CD4-positive, alpha-beta T cell (primary cell): ENCODE measurements at regions of chr6 and their contacts with region 1.

Region 1: DNA sequence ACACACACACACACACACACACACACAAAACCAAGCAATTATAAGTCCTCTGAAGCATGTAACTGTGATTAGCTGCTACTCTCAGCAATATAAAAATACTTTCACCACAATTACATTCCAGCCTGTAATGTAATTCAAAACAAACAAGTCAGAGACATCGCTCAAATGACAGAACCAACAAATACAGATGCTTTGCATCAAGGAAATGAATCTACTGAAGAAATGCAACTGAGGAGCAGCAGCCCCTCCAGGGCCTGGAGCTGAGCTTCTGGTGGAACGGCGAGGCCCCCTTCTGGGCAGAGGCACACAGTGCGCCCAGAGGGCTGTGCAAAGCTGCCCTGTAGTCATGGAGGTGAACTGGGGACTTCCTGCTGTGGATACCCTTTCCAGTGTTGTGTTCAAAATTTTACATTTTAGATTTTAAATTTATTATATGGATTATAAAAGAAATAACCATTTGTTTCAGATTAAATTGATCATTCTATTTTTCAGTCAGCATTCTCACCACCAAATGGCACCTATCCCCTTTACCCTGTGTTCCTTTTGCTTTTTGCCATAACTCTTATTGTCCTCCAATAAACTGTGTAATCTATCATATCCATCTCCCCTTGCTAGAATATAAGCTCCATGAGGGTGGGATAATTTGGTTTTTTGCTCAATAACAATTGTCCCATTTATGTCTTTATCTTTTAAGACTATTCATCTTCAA is 23.2 kb downstream of the ADAT2 start:
- DNase-seq: peak; percentile 59 to 84 (median 67)
- ATAC-seq: peak; percentile 100
- H3K4me3 ChIP-seq: no peak overlapping the region
- H3K4me3 Mint-ChIP-seq: no peak overlapping the region
- H3K27ac ChIP-seq: no peak overlapping the region
- H3K27ac Mint-ChIP-seq: peak overlapping the region; percentile 14
- H3K4me1 ChIP-seq: no peaks in the 10 kb centered on the region
- H3K4me1 Mint-ChIP-seq: no peaks in the 10 kb centered on the region
- H3K27me3 ChIP-seq: no peaks in the 10 kb centered on the region
- H3K27me3 Mint-ChIP-seq: no peaks in the 10 kb centered on the region
- CTCF ChIP-seq: peak; percentile 88

Region 2: DNA sequence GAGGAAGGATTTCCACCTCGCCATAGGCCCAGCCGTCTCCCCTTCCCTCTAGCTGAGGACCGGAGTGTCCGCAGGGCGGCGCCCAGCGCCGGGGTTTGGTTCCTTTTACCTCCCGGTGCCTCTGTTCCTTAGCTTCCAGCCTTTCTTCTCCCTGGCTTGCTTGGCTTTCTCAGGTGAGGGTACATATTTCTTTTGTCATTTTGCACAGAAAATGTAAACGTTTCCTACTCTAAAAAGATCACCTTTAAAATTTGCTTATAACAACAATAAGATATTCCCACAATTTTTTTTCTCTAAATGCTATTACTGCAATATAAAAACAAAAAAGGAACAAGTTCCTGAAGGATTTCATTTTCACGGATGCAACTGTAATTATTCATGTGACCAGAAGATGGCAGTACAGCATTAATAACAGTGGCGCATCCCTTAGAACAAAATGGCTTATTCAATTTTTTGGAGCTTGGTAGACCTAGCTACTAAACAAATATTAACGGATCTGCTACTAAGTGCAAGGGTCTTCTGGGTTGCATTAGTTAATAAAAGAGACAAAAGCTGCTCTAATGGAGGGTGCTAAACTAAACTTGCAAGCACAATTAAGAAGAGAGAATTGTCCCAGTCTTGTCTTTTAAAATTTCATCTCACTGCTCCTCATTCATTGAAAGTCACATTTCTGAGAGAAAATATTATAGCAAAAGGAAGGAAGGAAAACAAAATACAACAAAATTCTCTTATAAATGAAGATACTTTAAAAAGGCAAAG is 952.6 kb before region 1 on chr6:
- CTCF ChIA-PET with region 1: interaction called, 20 read pairs
- POLR2A ChIA-PET with region 1: no interaction called
- intact Hi-C with region 1: loop called (anchors 1 kb)
- DNase-seq: peak in 3 of 14 experiments; percentile 34 to 74 (median 64)
- ATAC-seq: peak; percentile 62
- H3K4me3 ChIP-seq: no peak overlapping the region
- H3K4me3 Mint-ChIP-seq: no peak overlapping the region
- H3K27ac ChIP-seq: no peak overlapping the region
- H3K27ac Mint-ChIP-seq: no peak overlapping the region
- H3K4me1 ChIP-seq: no peaks in the 10 kb centered on the region
- H3K4me1 Mint-ChIP-seq: peaks cover 6% of the 10 kb centered on the region
- H3K27me3 ChIP-seq: no peaks in the 10 kb centered on the region
- H3K27me3 Mint-ChIP-seq: no peaks in the 10 kb centered on the region
- CTCF ChIP-seq: peak; percentile 94

Region 3: DNA sequence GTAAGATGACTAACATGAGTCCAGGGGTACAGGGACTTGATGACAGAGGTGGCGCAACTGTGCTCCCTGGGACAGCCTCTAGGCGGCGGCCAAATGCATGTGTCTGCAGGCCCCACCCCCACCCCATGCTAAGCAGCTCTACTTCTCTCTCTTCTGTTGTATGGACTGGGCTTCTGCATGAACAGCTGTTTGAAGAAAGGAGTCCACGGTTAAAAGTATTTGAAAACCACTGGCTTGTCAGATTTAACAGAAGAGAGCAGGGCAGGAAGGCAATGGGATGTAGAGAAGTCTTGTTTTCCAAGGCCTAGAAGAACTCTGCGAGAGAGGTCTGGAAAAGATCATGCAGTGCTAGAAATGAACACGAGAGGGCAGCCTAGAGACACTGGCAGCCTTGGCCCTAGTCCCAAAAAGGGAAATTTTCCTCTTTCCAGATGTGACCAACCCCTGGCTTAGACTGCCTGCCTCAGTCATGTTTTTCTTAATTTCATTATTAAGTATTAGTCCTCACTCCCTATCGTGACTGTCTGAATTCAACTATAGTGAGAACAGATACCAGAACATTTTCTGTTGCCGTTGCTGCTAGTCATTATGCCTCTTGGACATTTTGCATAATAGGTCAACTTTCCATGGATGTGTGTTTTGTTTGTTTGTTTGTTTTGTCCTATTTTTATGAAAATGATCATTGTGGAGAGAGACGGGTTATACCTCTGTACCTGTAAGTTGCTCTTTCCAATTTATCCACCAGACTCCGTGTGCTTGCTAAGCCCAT is 860.5 kb before region 1 on chr6:
- CTCF ChIA-PET with region 1: interaction called, 7 read pairs
- POLR2A ChIA-PET with region 1: no interaction called
- intact Hi-C with region 1: loop called (anchors 1 to 5 kb)
- DNase-seq: peak; percentile 14 to 76 (median 47)
- ATAC-seq: peak; percentile 62
- H3K4me3 ChIP-seq: no peak overlapping the region
- H3K4me3 Mint-ChIP-seq: peak overlapping the region; percentile 57
- H3K27ac ChIP-seq: no peak overlapping the region
- H3K27ac Mint-ChIP-seq: peak overlapping the region; percentile 79
- H3K4me1 ChIP-seq: peaks cover 35% of the 10 kb centered on the region
- H3K4me1 Mint-ChIP-seq: peaks cover 77% of the 10 kb centered on the region
- H3K27me3 ChIP-seq: no peaks in the 10 kb centered on the region
- H3K27me3 Mint-ChIP-seq: no peaks in the 10 kb centered on the region
- CTCF ChIP-seq: peak; percentile 82

Region 4: GRCh38 chr6:142952614-142953013 is 474.6 kb before region 1 on chr6:
- CTCF ChIA-PET with region 1: no interaction called
- POLR2A ChIA-PET with region 1: no interaction called
- intact Hi-C with region 1: loop called in 1 of 2 experiments (anchors 5 kb)
- DNase-seq: peak in 1 of 14 experiments; percentile 46
- ATAC-seq: no peak
- H3K4me3 ChIP-seq: no peak overlapping the region
- H3K4me3 Mint-ChIP-seq: no peak overlapping the region
- H3K27ac ChIP-seq: no peak overlapping the region
- H3K27ac Mint-ChIP-seq: peak overlapping the region; percentile 98
- H3K4me1 ChIP-seq: no peaks in the 10 kb centered on the region
- H3K4me1 Mint-ChIP-seq: peaks cover 30% of the 10 kb centered on the region
- H3K27me3 ChIP-seq: no peaks in the 10 kb centered on the region
- H3K27me3 Mint-ChIP-seq: no peaks in the 10 kb centered on the region
- CTCF ChIP-seq: no peak

Region 5: DNA sequence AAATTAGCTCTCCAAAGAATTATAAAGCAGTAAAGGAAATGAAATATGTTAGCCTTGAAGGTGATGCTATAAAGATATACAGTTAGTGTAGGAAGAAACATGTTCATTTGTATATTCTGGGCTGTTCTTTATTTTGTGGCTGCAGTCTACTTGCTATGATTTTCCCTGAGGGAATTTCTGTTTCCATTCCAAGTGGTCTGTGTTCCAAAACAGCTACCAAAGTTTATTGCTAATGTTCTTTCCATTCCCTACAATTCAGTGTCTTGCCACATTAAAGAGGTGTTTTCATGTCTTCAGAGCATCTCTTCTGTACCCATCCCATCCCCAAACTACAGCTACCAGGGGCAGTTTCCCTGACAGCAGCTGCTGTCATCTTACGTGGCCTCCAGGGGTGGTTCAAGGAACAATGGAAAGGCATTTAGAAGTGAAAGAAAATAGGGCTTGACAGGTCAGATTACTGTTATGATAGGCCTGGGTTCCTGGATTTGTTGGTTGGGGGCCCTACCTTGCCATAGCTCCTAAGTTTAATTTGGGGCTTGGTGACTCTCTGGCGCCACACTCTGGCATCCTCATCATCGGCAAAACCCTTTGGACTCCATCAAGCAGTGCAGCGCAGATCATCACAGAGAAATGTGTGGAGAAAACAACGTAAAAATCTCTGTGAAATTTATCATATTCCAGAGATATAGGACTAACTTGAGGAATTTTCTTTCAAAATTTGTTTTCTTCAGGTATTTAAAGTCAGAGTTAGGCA is 400.4 kb before region 1 on chr6:
- CTCF ChIA-PET with region 1: no interaction called
- POLR2A ChIA-PET with region 1: no interaction called
- intact Hi-C with region 1: loop called (anchors 5 to 10 kb)
- DNase-seq: peak; percentile 18 to 72 (median 40)
- ATAC-seq: peak; percentile 60
- H3K4me3 ChIP-seq: no peak overlapping the region
- H3K4me3 Mint-ChIP-seq: no peak overlapping the region
- H3K27ac ChIP-seq: no peak overlapping the region
- H3K27ac Mint-ChIP-seq: no peak overlapping the region
- H3K4me1 ChIP-seq: no peaks in the 10 kb centered on the region
- H3K4me1 Mint-ChIP-seq: no peaks in the 10 kb centered on the region
- H3K27me3 ChIP-seq: no peaks in the 10 kb centered on the region
- H3K27me3 Mint-ChIP-seq: no peaks in the 10 kb centered on the region
- CTCF ChIP-seq: peak; percentile 62

Region 6: DNA sequence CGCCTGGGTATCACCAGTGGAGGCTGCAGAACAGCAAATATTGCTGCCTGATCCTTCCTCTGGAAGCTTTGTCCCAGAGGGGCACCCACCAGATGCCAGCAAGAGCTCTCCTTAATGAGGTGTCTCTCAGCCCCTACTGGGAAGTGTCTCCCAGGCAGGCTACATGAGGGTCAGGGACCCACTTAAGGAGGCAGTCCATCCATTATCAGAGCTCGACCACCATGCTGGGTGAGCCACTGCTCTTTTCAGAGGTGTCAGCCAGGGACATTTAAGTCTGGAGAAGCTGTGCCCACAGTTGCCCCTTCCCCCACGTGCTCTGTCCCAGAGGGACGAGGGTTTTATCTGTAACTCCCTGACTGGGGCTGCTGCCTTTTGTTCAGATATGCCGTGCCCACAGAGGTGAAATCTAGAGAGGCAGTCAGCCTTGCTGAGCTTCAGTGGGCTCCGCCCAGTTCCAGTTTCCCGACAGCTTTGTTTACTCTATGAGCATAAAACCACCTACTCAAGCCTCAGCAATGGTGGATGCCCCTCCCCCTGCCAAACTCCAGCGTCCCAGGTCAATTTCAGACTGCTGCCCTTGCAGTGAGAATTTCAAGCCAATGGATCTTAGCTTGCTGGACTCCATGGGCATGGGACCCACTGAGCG is 392.5 kb before region 1 on chr6:
- CTCF ChIA-PET with region 1: no interaction called
- POLR2A ChIA-PET with region 1: no interaction called
- intact Hi-C with region 1: loop called in 1 of 2 experiments (anchors 10 kb)
- DNase-seq: no peak
- ATAC-seq: no peak
- H3K4me3 ChIP-seq: no peak overlapping the region
- H3K4me3 Mint-ChIP-seq: no peak overlapping the region
- H3K27ac ChIP-seq: no peak overlapping the region
- H3K27ac Mint-ChIP-seq: no peak overlapping the region
- H3K4me1 ChIP-seq: peaks cover 4% of the 10 kb centered on the region
- H3K4me1 Mint-ChIP-seq: no peaks in the 10 kb centered on the region
- H3K27me3 ChIP-seq: no peaks in the 10 kb centered on the region
- H3K27me3 Mint-ChIP-seq: no peaks in the 10 kb centered on the region
- CTCF ChIP-seq: no peak

Region 7: GRCh38 chr6:144989319-144990107 is 1562.2 kb after region 1 on chr6:
- CTCF ChIA-PET with region 1: no interaction called
- POLR2A ChIA-PET with region 1: no interaction called
- intact Hi-C with region 1: no loop called
- DNase-seq: no peak
- ATAC-seq: no peak
- H3K4me3 ChIP-seq: no peak overlapping the region
- H3K4me3 Mint-ChIP-seq: no peak overlapping the region
- H3K27ac ChIP-seq: no peak overlapping the region
- H3K27ac Mint-ChIP-seq: no peak overlapping the region
- H3K4me1 ChIP-seq: no peaks in the 10 kb centered on the region
- H3K4me1 Mint-ChIP-seq: no peaks in the 10 kb centered on the region
- H3K27me3 ChIP-seq: peaks cover 0 to 12% of the 10 kb centered on the region in 2 experiments
- H3K27me3 Mint-ChIP-seq: peaks cover 35% of the 10 kb centered on the region
- CTCF ChIP-seq: no peak